ENCODE measurements at regions of chr11 and their contacts with region 1.

Region 1: DNA sequence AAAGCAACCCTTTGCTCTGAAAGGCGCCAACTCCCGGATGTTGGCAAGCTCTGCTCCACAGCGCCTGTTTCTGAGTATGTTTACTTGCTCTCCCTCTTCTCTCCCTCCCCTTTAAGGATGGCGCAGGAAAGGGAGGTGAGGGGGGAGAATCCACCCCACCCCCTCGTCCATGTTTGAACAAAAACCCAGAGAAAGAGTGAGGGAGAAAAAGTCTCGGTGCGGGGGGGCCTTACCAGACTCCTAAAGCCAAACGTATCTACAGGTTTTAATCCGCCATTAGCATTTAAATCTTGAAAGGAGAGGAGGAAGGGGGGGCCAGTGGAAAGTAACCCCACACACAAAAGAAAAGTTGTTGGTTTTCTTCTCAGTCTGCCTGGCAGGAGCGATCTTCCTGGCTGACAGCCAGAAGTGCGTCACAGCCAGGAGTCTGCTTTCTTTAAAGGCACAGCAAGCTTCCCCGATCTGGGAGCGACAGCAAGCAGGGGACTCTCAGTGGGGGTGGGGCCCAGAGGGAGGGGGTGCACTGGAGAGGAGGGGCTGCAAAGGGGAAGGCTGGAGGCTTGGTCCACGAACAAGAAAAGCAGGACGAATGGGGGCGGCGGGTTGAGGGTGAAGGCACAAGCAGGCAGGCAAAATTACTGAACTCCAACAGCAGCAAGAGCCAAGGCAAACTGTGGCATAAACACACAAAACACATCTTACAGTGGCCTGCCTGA is 39.5 kb downstream of the NUMA1 start:
- DNase-seq: peak; percentile 97 to 98 (median 98)
- H3K4me3 ChIP-seq: peak overlapping the region; percentile 57
- H3K27ac ChIP-seq: peak overlapping the region; percentile 89 to 99
- H3K4me1 ChIP-seq: peaks cover 26% of the 10 kb centered on the region
- H3K27me3 ChIP-seq: no peaks in the 10 kb centered on the region
- CTCF ChIP-seq: peak in 1 of 3 donors; percentile 10
- EP300 ChIP-seq: peak; percentile 50
- POLR2A ChIP-seq: peak; percentile 23

Region 2: DNA sequence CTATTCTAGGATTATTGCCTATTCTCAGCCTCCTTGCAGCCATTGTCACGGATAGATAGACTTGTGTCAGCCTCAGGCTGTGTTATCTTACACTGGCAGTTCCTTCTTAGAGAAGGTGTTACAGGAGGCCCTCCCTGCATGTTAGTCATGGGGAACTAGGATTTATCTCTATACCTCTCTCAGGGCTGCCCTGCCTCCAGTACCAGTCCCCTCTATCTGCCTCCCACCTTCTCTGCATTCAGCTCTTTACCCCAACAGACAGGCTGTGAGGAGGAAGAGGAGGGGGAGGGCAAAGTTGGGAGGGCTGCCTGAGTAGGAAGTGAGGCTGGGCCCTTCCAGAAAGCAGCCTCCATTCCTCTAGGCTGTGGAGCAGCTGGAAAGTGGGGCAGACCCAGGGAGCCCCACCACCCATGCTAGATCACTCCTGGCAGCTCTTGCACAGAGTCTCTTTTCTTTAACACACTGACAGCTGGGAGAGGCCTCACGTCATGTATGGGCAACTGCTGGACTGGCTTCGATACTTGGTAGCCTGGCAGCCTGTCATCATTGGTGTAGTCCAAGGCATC is 45.1 kb before region 1 on chr11:
- intact Hi-C with region 1: loop called in 1 of 4 experiments (anchors 2 kb)
- DNase-seq: no peak
- H3K4me3 ChIP-seq: no peak overlapping the region
- H3K27ac ChIP-seq: no peak overlapping the region
- H3K4me1 ChIP-seq: peaks cover 3% of the 10 kb centered on the region
- H3K27me3 ChIP-seq: no peaks in the 10 kb centered on the region
- CTCF ChIP-seq: no peak
- EP300 ChIP-seq: no peak
- POLR2A ChIP-seq: no peak

Region 3: DNA sequence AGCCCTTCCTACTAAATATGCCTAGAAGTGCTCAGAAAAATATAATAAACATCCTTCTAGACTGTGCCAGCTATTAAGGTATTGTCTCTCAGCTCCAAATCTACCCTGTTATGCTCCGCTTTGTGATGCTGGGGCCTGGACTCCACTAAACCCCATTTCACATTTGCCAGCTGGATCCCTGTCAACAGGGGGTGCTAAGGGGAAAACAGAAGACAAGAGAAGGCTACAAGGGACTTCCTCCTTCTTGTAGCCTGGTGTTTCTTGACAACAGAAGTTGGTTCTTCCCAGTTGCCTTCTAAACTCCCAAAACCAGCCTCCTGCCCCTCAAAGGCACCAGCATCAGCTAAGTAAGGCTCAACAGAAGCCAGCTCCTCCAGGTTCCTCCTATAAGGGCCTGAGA is 34.2 kb after region 1 on chr11:
- intact Hi-C with region 1: loop called in 2 of 4 experiments (anchors 2 to 5 kb)
- DNase-seq: no peak
- H3K4me3 ChIP-seq: no peak overlapping the region
- H3K27ac ChIP-seq: no peak overlapping the region
- H3K4me1 ChIP-seq: peaks cover 4% of the 10 kb centered on the region
- H3K27me3 ChIP-seq: no peaks in the 10 kb centered on the region
- CTCF ChIP-seq: no peak
- EP300 ChIP-seq: no peak
- POLR2A ChIP-seq: no peak

Region 4: GRCh38 chr11:72080256-72080974 is 39.5 kb after region 1 on chr11 and contains the starts of genes LRRC51 and NUMA1:
- intact Hi-C with region 1: loop called in 2 of 4 experiments (anchors 2 to 5 kb)
- DNase-seq: peak; percentile 99 to 100 (median 99)
- H3K4me3 ChIP-seq: peak within 1 kb of the TSS; percentile 63
- H3K27ac ChIP-seq: peak within 1 kb of the TSS; percentile 36 to 89
- H3K4me1 ChIP-seq: no peaks in the 10 kb centered on the region
- H3K27me3 ChIP-seq: no peaks in the 10 kb centered on the region
- CTCF ChIP-seq: no peak
- EP300 ChIP-seq: peak; percentile 65
- POLR2A ChIP-seq: peak; percentile 53
- total RNA-seq, gene LRRC51: 7.2 to 21.0 (median 9.5) TPM
- total RNA-seq, gene NUMA1: 190 to 270 (median 252) TPM

Measured in ovary (tissue), 10 donors.